ENCODE measurements at regions of chr13 and their contacts with region 1.

Region 1: DNA sequence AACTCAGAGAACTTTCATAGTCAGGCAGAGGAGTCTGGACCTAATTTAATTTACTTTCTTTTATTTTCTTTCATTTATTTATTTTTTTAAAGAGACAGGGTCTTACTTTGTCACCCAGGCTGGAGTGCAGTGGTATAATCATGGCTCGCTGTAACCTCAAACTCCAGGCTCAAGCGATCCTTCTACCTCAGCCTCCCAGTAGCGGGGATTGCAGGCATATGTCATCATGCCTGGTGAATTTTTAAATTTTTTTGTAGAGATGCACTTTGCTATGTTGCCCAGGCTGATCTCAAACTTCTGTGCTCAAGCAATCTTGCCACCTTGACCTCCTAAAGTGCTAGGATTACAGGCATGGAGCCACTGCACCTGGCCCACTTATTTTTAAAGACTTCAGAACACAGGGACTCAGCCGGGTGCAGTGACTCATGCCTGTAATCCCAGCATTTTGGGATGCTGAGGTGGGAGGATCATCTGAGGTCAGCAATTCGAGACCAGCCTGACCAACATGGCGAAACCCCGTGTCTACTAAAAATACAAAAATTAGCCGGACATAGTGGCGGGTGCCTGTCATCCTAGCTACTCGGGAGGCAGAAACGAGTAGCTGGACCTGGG is 50.6 kb downstream of the KLF5 start:
- DNase-seq: no peak
- ATAC-seq: no peak
- H3K4me3 ChIP-seq: no peak overlapping the region
- H3K4me3 Mint-ChIP-seq: no peak overlapping the region
- H3K27ac ChIP-seq: no peak overlapping the region
- H3K27ac Mint-ChIP-seq: no peak overlapping the region
- H3K4me1 ChIP-seq: no peaks in the 10 kb centered on the region
- H3K4me1 Mint-ChIP-seq: no peaks in the 10 kb centered on the region
- H3K27me3 ChIP-seq: no peaks in the 10 kb centered on the region
- H3K27me3 Mint-ChIP-seq: peaks cover 5 to 7% of the 10 kb centered on the region in 2 donors

Region 2: GRCh38 chr13:72495681-72496080 is 613.7 kb before region 1 on chr13:
- CTCF ChIA-PET with region 1: no interaction called
- POLR2A ChIA-PET with region 1: no interaction called
- DNase-seq: no peak
- ATAC-seq: no peak
- H3K4me3 ChIP-seq: no peak overlapping the region
- H3K4me3 Mint-ChIP-seq: no peak overlapping the region
- H3K27ac ChIP-seq: no peak overlapping the region
- H3K27ac Mint-ChIP-seq: no peak overlapping the region
- H3K4me1 ChIP-seq: no peaks in the 10 kb centered on the region
- H3K4me1 Mint-ChIP-seq: no peaks in the 10 kb centered on the region
- H3K27me3 ChIP-seq: no peaks in the 10 kb centered on the region
- H3K27me3 Mint-ChIP-seq: peaks cover 0 to 10% of the 10 kb centered on the region in 2 donors

Region 3: DNA sequence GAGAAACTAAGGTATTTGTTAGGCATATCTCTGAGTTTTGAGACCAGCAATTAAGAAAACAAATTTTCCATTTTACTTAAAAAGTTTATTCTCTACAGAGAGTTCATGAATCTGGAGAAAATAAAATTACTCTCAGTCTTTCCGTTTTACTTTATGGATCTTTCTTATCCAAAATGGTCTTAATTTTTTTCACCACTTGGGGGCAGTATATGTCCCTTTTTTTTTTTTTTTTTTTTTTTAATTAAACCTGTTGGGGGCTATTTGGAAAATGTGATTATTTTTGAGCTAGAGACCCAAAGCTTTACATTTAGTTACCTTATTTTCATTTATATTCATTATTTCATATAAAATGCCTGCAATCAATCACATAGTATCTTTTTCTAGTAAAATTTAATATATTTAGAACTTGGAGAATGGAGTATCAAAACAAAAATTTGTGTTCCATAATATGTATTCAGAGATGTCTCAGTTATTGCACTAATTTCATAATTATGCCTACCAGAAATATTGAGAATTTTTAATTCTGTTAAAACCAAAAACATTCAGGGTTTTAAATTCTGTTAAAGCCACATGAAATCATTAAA is 300.4 kb before region 1 on chr13:
- CTCF ChIA-PET with region 1: no interaction called
- POLR2A ChIA-PET with region 1: no interaction called
- DNase-seq: peak in 1 of 35 experiments; percentile 57
- ATAC-seq: no peak
- H3K4me3 ChIP-seq: no peak overlapping the region
- H3K4me3 Mint-ChIP-seq: no peak overlapping the region
- H3K27ac ChIP-seq: no peak overlapping the region
- H3K27ac Mint-ChIP-seq: no peak overlapping the region
- H3K4me1 ChIP-seq: no peaks in the 10 kb centered on the region
- H3K4me1 Mint-ChIP-seq: peaks cover 0 to 2% (median 2%) of the 10 kb centered on the region in 3 donors
- H3K27me3 ChIP-seq: no peaks in the 10 kb centered on the region
- H3K27me3 Mint-ChIP-seq: no peaks in the 10 kb centered on the region

Region 4: DNA sequence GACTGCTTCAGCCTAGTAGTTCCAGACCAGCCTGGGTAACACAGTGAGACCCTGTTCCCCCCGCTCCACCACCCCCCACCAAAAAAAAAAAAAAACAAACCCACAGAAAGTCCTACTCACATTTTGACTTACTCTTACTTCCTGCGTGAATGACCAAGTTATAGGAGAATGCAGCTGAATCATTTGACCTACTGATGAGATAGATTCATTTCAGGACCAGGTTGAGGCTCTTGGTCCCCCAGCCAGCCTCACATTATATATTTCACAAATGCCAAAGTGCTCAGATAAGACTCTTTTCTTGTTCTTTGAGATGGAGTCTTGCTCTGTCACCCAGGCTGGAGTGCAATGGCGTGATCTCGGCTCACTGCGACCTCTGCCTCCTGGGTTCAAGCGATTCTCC is 19.6 kb after region 1 on chr13:
- CTCF ChIA-PET with region 1: interaction called in 1 of 2 experiments, 15 read pairs
- POLR2A ChIA-PET with region 1: no interaction called
- DNase-seq: no peak
- ATAC-seq: no peak
- H3K4me3 ChIP-seq: no peak overlapping the region
- H3K4me3 Mint-ChIP-seq: no peak overlapping the region
- H3K27ac ChIP-seq: no peak overlapping the region
- H3K27ac Mint-ChIP-seq: no peak overlapping the region
- H3K4me1 ChIP-seq: no peaks in the 10 kb centered on the region
- H3K4me1 Mint-ChIP-seq: no peaks in the 10 kb centered on the region
- H3K27me3 ChIP-seq: peaks cover 0 to 5% of the 10 kb centered on the region in 2 experiments
- H3K27me3 Mint-ChIP-seq: peaks cover 0 to 1% of the 10 kb centered on the region in 2 donors